Breast epithelium (tissue), 4 donors: ENCODE measurements at regions of chr18 and their contacts with region 1.

Region 1: GRCh38 chr18:55214969-55215368 is 255.7 kb upstream of the CCDC68 start:
- DNase-seq: no peak
- H3K4me3 ChIP-seq: no peak overlapping the region
- H3K27ac ChIP-seq: no peak overlapping the region
- H3K4me1 ChIP-seq: no peaks in the 10 kb centered on the region
- H3K27me3 ChIP-seq: no peaks in the 10 kb centered on the region
- CTCF ChIP-seq: no peak
- POLR2A ChIP-seq: no peak

Region 2: DNA sequence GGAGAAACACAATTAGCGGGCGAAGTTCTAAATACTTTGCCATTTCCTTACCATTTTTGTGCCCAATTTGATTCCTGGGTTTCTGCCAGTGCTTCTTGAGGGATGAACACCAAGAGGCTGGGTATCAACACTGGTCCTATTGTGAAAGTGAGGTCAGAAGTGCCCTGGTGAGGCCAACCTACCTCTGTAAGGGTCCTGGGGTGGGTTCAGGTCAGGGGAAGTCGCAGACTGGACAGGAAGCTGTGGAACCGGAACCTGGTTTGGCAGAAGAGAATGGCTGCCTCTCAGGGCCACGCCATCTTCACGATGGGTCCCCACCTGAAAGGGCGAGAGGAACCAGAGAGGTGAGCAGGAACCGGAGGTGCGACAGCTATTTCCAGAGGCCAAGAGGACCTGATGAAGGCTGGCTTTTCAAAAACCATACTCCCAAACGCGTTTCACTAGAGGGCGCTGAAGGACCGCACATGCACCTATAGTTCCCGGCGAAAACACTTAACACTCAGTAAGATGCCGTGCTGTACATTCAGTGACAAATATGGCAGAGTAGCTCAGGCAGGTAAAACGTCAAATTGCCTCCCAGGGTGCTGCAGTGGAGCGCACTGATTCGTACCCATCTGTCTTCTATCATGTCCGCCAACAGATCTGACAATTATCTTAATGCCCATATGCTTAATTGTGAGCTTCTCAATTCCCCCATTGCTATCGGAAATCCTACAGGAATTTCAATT is 19.6 kb after region 1 on chr18:
- intact Hi-C with region 1: no loop called
- DNase-seq: peak; percentile 63 to 64
- H3K4me3 ChIP-seq: peak overlapping the region in 1 of 3 donors; percentile 39
- H3K27ac ChIP-seq: peak overlapping the region in 1 of 2 donors; percentile 48
- H3K4me1 ChIP-seq: no peaks in the 10 kb centered on the region
- H3K27me3 ChIP-seq: no peaks in the 10 kb centered on the region
- CTCF ChIP-seq: peak; percentile 29 to 79 (median 63)
- POLR2A ChIP-seq: no peak

Region 3: DNA sequence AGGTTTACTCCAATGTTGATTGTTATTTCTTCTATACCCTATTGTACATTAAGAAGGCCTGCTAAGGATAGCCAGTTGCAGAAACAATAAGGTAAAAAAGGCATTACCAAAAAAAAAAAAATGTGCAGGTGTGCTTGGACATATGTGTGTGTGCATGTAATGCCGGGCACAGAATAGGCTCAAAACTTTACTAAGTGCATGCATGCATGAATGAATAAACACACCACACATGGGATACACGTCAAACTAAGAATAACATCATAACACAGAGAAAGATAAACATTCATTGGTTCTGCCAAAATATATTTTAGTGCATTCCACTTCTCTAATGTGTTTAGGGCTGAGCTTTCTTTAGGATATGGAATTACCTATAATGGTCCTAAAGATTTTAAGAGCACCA is 74.8 kb after region 1 on chr18:
- intact Hi-C with region 1: no loop called
- DNase-seq: no peak
- H3K4me3 ChIP-seq: no peak overlapping the region
- H3K27ac ChIP-seq: no peak overlapping the region
- H3K4me1 ChIP-seq: no peaks in the 10 kb centered on the region
- H3K27me3 ChIP-seq: no peaks in the 10 kb centered on the region
- CTCF ChIP-seq: no peak
- POLR2A ChIP-seq: no peak

Region 4: DNA sequence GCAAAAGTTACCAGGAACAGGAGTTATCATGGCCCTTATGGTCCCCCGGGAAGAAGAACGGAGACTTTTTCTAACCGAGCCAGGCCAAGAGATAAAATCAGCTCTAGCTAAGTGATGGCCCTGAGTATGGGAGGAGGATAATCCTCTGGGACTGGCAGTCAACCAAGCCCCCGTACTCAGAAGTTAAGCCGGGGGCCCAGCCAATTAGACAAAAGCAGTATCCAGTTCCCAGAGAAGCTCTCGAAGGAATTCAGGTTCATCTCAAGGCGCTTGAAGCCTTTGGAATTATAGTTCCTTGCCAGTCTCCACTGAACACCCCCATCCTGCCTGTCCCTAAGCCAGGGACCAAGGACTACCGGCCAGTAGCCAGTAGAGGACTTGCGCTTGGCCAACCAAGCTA is 738.4 kb after region 1 on chr18:
- intact Hi-C with region 1: no loop called
- DNase-seq: no peak
- H3K4me3 ChIP-seq: no peak overlapping the region
- H3K27ac ChIP-seq: no peak overlapping the region
- H3K4me1 ChIP-seq: no peaks in the 10 kb centered on the region
- H3K27me3 ChIP-seq: no peaks in the 10 kb centered on the region
- CTCF ChIP-seq: no peak
- POLR2A ChIP-seq: no peak

Region 5: GRCh38 chr18:55974521-55974920 is 759.6 kb after region 1 on chr18:
- intact Hi-C with region 1: no loop called
- DNase-seq: no peak
- H3K4me3 ChIP-seq: no peak overlapping the region
- H3K27ac ChIP-seq: no peak overlapping the region
- H3K4me1 ChIP-seq: no peaks in the 10 kb centered on the region
- H3K27me3 ChIP-seq: no peaks in the 10 kb centered on the region
- CTCF ChIP-seq: no peak
- POLR2A ChIP-seq: no peak

Region 6: DNA sequence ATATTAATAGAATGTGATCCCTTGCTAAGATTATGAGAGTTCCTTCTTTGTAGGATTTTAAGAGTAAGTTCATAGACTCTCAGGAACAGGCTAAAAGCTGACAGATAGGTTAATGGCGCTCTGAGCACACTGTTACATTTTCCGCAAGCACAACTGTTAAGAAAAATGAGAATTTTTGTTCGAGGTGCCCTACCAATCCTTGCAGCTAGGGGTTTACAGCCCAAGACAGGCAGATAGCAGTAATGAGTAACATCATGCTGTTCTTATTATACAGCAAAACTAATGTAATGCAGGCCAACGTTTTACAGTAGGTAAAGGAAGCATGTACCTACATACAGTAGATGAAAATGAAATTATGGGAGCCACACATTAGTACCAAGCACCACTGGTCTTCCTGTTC is 1920.7 kb after region 1 on chr18:
- intact Hi-C with region 1: loop called (anchors 5 kb)
- DNase-seq: no peak
- H3K4me3 ChIP-seq: no peak overlapping the region
- H3K27ac ChIP-seq: no peak overlapping the region
- H3K4me1 ChIP-seq: no peaks in the 10 kb centered on the region
- H3K27me3 ChIP-seq: no peaks in the 10 kb centered on the region
- CTCF ChIP-seq: no peak
- POLR2A ChIP-seq: no peak